AG04450 (cell line): ENCODE measurements at regions of chr17 and their contacts with region 1.

Region 1: DNA sequence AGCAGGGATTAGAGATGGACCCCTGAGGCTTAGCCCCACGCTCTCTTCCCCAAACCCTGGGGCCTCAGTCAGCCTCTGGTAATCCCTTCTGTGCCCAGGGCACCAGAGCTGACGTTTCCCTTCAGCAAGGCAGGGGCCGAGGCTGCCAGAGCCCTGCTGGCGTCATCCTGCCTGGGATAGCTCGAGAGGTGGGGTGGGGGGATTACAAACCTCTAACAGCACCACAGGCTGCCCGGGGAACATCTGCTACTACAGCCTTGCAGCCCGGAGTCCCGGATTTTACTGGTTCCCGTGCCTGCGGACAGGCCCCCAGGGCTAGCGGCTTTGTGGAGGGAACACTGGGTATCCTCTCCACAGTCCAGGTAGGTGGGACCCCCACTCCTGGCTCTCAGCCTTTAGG is at the start of gene AANAT:
- DNase-seq: no peak
- H3K4me3 ChIP-seq: no peak within 1 kb of the TSS
- H3K27ac ChIP-seq: no peak within 1 kb of the TSS
- H3K27me3 ChIP-seq: no peaks in the 10 kb centered on the region
- CTCF ChIP-seq: no peak
- polyA plus RNA-seq, gene AANAT: 0.12 TPM in 1 of 2 replicates, not detected in the other

Region 2: GRCh38 chr17:76166168-76166567 is 301.2 kb before region 1 on chr17:
- CTCF ChIA-PET with region 1: no interaction called
- POLR2A ChIA-PET with region 1: no interaction called
- DNase-seq: no peak
- H3K4me3 ChIP-seq: no peak overlapping the region
- H3K27ac ChIP-seq: no peak overlapping the region
- H3K27me3 ChIP-seq: peaks cover 12% of the 10 kb centered on the region
- CTCF ChIP-seq: no peak

Region 3: GRCh38 chr17:76501018-76501826 is 33.9 kb after region 1 on chr17 and contains the start of gene RHBDF2:
- CTCF ChIA-PET with region 1: interaction called, 121 read pairs
- POLR2A ChIA-PET with region 1: interaction called, 3 read pairs
- DNase-seq: no peak
- H3K4me3 ChIP-seq: peak within 1 kb of the TSS; percentile 66
- H3K27ac ChIP-seq: peak within 1 kb of the TSS; percentile 47
- H3K27me3 ChIP-seq: no peaks in the 10 kb centered on the region
- CTCF ChIP-seq: no peak
- polyA plus RNA-seq, gene RHBDF2: 5.4 and 8.7 TPM in 2 replicates

Region 4: DNA sequence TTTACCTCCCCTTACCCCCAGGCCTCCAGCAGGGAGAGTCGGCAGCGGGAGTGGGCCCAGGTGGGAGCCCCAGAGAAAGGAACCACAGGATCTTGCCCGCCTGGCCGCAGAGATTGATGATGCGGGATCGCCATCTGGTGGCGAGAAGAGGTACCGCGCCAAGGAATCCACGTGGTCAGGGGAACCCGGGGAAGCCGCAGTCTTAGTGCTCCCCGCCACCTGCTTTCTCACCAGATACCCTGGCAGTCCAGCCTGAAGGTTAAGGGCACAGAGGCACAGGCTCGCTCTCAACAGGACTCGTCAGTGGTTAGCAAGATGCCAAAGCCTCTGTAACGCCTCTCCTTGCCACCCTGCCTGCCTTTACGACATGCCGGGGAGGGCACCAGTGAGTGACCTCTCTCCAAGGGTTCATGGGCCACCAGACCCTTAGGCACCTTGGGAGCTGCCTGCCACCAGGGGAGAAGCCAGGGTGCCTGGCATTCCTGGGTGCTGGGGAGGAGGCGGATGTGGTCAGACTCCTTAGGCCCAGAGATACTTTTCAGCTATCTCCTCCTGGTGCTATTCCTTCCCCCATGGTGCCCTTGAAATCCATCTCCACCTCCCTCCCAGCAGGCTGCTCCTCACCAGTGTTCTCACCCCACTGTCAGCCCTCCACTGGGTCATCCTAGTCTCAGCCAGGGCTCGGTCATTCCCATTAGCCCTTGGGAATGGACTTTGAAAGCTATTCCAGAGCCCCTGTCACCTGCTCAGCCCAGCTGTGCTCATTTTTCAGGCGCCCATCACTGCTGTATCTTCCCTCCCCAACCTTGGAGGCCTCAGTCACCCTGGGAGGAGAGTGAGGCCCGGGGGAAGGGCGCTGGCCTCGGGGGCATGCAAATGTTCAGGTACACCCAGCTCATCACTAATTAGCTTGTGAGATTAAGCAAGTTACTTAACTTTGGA is 39.3 kb after region 1 on chr17:
- CTCF ChIA-PET with region 1: interaction called, 121 read pairs
- POLR2A ChIA-PET with region 1: interaction called, 6 read pairs
- DNase-seq: no peak
- H3K4me3 ChIP-seq: no peak overlapping the region
- H3K27ac ChIP-seq: no peak overlapping the region
- H3K27me3 ChIP-seq: peaks cover 5% of the 10 kb centered on the region
- CTCF ChIP-seq: peak; percentile 87